Activated B cell treated with CpG ODN at 0.5 μM for 24 hours (primary cell): ENCODE measurements at regions of chr3 and their contacts with region 1.

Region 1: GRCh38 chr3:121995161-121996137 is 26.6 kb downstream of the ILDR1 start:
- DNase-seq: peak; percentile 57
- ATAC-seq: peak; percentile 79
- H3K4me3 Mint-ChIP-seq: peak overlapping the region; percentile 47
- H3K27ac Mint-ChIP-seq: peak overlapping the region; percentile 85
- H3K4me1 Mint-ChIP-seq: peaks cover 99% of the 10 kb centered on the region
- H3K27me3 Mint-ChIP-seq: no peaks in the 10 kb centered on the region
- CTCF ChIP-seq: no peak

Region 2: DNA sequence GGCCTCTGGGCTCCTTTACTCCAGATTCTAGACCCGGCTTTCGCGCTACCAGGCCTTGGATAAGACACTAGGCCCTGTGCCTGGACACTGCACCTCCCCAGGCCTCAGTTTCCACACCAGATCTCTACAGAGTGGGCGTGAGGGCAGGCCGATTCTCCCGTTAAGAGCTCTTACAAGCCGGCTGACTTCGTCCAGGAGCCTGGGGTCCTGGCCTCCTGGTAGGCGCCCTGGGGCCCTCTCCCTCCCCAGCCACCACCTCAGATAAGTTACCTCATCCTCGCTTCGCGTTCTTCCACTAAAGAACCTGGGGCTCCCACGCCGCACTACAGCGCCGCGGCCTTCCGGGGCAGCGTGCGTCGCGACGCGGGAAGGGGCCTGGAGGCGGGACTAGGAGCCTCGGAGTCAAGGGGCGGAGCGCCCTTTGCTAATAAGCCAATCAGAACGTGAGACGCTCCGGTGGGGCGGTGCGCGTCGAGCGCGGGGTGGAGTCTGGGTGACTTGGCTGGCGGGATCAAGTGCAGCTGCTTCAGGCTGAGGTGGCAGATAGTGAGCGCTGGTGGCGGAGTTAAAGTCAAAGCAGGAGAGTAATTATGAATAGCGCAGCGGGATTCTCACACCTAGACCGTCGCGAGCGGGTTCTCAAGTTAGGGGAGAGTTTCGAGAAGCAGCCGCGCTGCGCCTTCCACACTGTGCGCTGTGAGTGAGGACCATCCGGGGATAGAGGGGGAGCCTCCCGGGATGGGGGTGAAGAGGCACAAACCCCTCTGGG is 160.6 kb before region 1 on chr3 and contains the starts of genes EAF2 and IQCB1:
- CTCF ChIA-PET with region 1: no interaction called
- POLR2A ChIA-PET with region 1: no interaction called
- intact Hi-C with region 1: loop called (anchors 2 kb)
- DNase-seq: peak; percentile 93
- ATAC-seq: peak; percentile 98
- H3K4me3 Mint-ChIP-seq: peak within 1 kb of the TSS; percentile 99
- H3K27ac Mint-ChIP-seq: peak within 1 kb of the TSS; percentile 95
- H3K4me1 Mint-ChIP-seq: peaks cover 67% of the 10 kb centered on the region
- H3K27me3 Mint-ChIP-seq: no peaks in the 10 kb centered on the region
- CTCF ChIP-seq: no peak
- total RNA-seq, gene EAF2: 43.3 and 47.7 TPM in 2 replicates
- total RNA-seq, gene IQCB1: 40.1 and 52.4 TPM in 2 replicates

Region 3: GRCh38 chr3:121979734-121980449 is 15.6 kb before region 1 on chr3:
- CTCF ChIA-PET with region 1: interaction called, 3 read pairs
- POLR2A ChIA-PET with region 1: no interaction called
- intact Hi-C with region 1: loop called (anchors 1 kb)
- DNase-seq: no peak
- ATAC-seq: no peak
- H3K4me3 Mint-ChIP-seq: no peak overlapping the region
- H3K27ac Mint-ChIP-seq: peak overlapping the region; percentile 24
- H3K4me1 Mint-ChIP-seq: peaks cover 27% of the 10 kb centered on the region
- H3K27me3 Mint-ChIP-seq: no peaks in the 10 kb centered on the region
- CTCF ChIP-seq: no peak

Region 4: GRCh38 chr3:122055215-122055614 is 59.8 kb after region 1 on chr3 and contains the start of gene CD86:
- CTCF ChIA-PET with region 1: interaction called, 11 read pairs
- POLR2A ChIA-PET with region 1: interaction called, 6 read pairs
- intact Hi-C with region 1: loop called (anchors 1 kb)
- DNase-seq: no peak
- ATAC-seq: peak; percentile 94
- H3K4me3 Mint-ChIP-seq: peak within 1 kb of the TSS; percentile 84
- H3K27ac Mint-ChIP-seq: peak within 1 kb of the TSS; percentile 79
- H3K4me1 Mint-ChIP-seq: peaks cover 49% of the 10 kb centered on the region
- H3K27me3 Mint-ChIP-seq: no peaks in the 10 kb centered on the region
- CTCF ChIP-seq: no peak
- total RNA-seq, gene CD86: 31.2 and 31.7 TPM in 2 replicates

Region 5: GRCh38 chr3:122092460-122093165 is 97.2 kb after region 1 on chr3:
- CTCF ChIA-PET with region 1: interaction called, 8 read pairs
- POLR2A ChIA-PET with region 1: interaction called, 7 read pairs
- intact Hi-C with region 1: loop called (anchors 1 kb)
- DNase-seq: no peak
- ATAC-seq: peak; percentile 50
- H3K4me3 Mint-ChIP-seq: peak overlapping the region; percentile 46
- H3K27ac Mint-ChIP-seq: peak overlapping the region; percentile 81
- H3K4me1 Mint-ChIP-seq: peaks cover 40% of the 10 kb centered on the region
- H3K27me3 Mint-ChIP-seq: no peaks in the 10 kb centered on the region
- CTCF ChIP-seq: no peak

Region 6: DNA sequence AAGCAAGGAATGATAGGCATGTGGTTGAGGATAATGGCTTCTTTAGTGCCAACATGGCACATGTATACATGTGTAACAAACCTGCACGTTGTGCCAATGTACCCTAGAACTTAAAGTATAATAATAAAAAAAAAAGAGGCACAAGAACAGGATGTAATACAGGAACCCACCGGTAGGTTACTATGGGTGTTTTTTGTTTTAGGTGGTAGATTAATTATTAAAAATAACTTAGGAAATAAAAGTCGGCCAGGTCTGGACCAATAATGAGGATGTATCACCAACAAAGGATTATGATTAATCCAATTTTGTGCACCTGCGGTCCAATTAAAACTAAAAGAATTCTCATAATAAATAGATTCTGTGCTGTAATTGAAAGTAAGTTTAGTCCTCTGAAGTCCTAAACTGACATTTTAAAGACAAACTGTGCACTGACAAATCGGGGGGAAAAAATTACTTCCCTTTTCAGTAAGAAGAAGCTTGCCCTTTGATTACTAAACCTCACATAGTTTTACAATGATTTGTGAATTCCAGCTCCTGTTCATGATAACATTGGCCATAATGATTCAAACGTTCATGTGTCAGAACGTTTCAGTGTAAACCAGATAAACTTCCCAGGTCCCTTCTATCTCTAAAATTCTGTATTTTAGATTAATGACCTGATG is 250.2 kb after region 1 on chr3:
- CTCF ChIA-PET with region 1: no interaction called
- POLR2A ChIA-PET with region 1: no interaction called
- intact Hi-C with region 1: loop called (anchors 5 kb)
- DNase-seq: no peak
- ATAC-seq: peak; percentile 14
- H3K4me3 Mint-ChIP-seq: peak overlapping the region; percentile 78
- H3K27ac Mint-ChIP-seq: peak overlapping the region; percentile 53
- H3K4me1 Mint-ChIP-seq: peaks cover 30% of the 10 kb centered on the region
- H3K27me3 Mint-ChIP-seq: peaks cover under 1% of the 10 kb centered on the region
- CTCF ChIP-seq: peak; percentile 69

Region 7: GRCh38 chr3:122572940-122573412 is 577.5 kb after region 1 on chr3:
- CTCF ChIA-PET with region 1: no interaction called
- POLR2A ChIA-PET with region 1: no interaction called
- intact Hi-C with region 1: loop called (anchors 10 kb)
- DNase-seq: no peak
- ATAC-seq: peak; percentile 22
- H3K4me3 Mint-ChIP-seq: peak overlapping the region; percentile 57
- H3K27ac Mint-ChIP-seq: peak overlapping the region; percentile 93
- H3K4me1 Mint-ChIP-seq: peaks cover 80% of the 10 kb centered on the region
- H3K27me3 Mint-ChIP-seq: no peaks in the 10 kb centered on the region
- CTCF ChIP-seq: no peak